ENCODE measurements at regions of chr11 and their contacts with region 1.

Region 1: GRCh38 chr11:12599408-12600143 is 74.6 kb upstream of the TEAD1 start:
- DNase-seq: peak; percentile 43

Region 2: GRCh38 chr11:12122083-12122482 is 477.5 kb before region 1 on chr11:
- in situ Hi-C with region 1: no loop called
- DNase-seq: no peak

Region 3: GRCh38 chr11:12331239-12331874 is 268.2 kb before region 1 on chr11:
- in situ Hi-C with region 1: no loop called
- DNase-seq: peak; percentile 68

Region 4: GRCh38 chr11:12755510-12756453 is 156.2 kb after region 1 on chr11:
- in situ Hi-C with region 1: loop called (anchors 10 kb)
- DNase-seq: no peak

Measured in KBM-7 (cell line).